Left colon (tissue), 2 donors: ENCODE measurements at regions of chr14 and their contacts with region 1.

Region 1: GRCh38 chr14:58072288-58073071 is 79.5 kb downstream of the ARMH4 start:
- DNase-seq: peak; percentile 22 to 23
- ATAC-seq: peak; percentile 75

Region 2: GRCh38 chr14:57486767-57487379 is 585.6 kb before region 1 on chr14:
- intact Hi-C with region 1: loop called in 1 of 2 experiments (anchors 5 kb)
- DNase-seq: no peak
- ATAC-seq: peak; percentile 42

Region 3: DNA sequence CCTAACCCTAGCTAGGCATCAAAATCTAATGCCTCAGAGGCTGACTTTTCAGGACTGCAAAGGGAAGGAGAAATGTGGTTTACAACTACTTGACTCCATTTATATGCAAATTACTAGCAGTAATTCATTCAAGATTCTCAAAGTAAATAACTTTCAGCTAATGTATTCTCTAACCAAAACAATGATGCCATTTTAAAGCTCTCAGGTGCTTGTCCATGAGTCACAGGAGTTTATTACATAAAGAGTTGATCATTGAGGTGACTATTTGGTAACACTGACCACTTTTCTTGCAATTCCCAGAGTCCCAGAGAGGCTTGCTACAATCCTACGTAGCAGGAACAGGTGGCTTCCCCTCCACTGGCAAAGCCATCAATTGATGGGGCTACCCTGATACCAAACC is 97.6 kb before region 1 on chr14:
- intact Hi-C with region 1: no loop called
- DNase-seq: no peak
- ATAC-seq: no peak